Transverse colon (tissue), 4 donors: ENCODE measurements at regions of chr9 and their contacts with region 1.

Region 1: DNA sequence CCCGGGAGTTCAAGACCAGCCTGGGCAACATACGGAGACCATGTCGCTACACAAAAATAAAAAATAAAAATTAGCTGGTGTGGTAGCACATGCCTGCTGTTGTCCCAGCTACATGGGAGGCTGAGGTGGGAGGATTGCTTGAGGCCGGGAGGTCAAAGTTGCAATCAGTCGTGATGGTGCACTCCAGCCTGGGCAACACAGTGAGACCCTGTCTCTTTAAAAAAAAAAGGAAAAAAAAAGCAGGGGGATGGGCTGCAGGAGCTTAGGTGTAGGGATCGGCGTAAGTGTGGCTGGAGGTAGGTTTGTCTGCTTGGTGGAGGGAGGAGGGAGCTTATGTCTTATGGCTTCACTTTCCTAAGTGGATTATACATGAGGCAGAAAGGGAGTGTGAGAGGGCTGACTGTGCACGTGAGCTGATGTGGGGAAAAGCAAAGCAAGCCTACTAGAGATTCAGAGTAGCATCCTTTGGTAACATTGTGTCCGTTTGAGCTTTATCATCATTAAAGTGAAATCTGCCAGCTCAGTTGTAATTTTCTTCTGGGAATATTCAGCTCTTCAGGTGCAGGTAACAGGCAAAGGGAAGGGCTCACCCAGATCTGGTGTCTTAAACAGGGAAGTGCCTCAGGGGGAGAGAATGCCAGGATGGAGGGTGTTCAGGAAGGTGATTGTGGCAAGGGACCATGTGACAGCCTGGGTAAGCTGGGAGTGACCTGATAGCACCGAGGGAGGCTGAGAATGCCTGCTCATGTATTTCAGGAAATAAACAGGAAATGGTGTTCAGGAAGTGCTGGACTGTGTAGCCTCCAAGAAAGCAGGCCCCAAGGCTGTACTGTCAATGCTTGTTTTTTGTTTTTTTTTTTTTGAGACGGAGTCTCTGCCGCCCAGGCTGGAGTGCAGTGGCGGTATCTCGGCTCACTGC is 17.6 kb upstream of the SETX start:
- DNase-seq: peak; percentile 35
- H3K4me3 ChIP-seq: no peak overlapping the region
- H3K27ac ChIP-seq: peak overlapping the region; percentile 16 to 53 (median 36)
- H3K4me1 ChIP-seq: peaks cover 0 to 9% (median 0%) of the 10 kb centered on the region in 4 donors
- H3K27me3 ChIP-seq: no peaks in the 10 kb centered on the region
- CTCF ChIP-seq: no peak
- EP300 ChIP-seq: no peak
- POLR2A ChIP-seq: no peak

Region 2: DNA sequence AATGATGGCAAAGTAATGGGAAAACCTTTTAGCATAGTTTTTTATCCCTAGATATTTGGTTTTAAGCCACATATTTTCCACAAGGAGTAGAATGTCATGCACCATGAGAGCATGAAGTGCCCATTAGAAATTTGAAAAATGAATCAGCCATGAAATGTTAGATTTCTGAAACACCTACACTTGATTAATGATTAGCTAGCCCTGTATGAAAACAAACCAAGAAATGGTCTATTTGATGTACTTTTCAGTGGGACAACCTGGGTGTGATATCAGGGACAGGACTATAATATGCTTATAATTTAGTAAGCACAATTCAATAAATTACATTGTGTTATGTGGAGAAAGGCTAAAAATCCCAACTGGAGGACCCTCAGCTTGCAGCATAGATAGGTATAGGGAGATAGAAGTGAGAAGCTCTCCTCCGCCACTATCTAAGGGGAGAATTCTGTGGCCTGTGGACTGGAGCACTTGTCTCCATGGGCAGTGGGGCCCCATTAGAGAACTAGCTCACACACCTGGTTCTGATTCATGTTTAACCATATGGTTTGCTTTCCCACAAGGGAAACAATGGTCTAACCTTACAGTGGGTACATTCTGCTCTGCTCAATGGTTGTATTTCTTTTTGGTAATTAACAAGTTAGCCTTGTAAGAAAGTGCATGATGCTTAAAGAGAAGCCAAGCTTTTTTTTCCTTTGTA is 1211.9 kb before region 1 on chr9:
- in situ Hi-C with region 1: no loop called
- intact Hi-C with region 1: loop called (anchors 5 kb)
- DNase-seq: no peak
- H3K4me3 ChIP-seq: no peak overlapping the region
- H3K27ac ChIP-seq: no peak overlapping the region
- H3K4me1 ChIP-seq: no peaks in the 10 kb centered on the region
- H3K27me3 ChIP-seq: no peaks in the 10 kb centered on the region
- CTCF ChIP-seq: no peak
- EP300 ChIP-seq: no peak
- POLR2A ChIP-seq: no peak

Region 3: GRCh38 chr9:132216861-132217619 is 155.4 kb before region 1 on chr9:
- in situ Hi-C with region 1: no loop called
- intact Hi-C with region 1: no loop called
- DNase-seq: no peak
- H3K4me3 ChIP-seq: no peak overlapping the region
- H3K27ac ChIP-seq: no peak overlapping the region
- H3K4me1 ChIP-seq: no peaks in the 10 kb centered on the region
- H3K27me3 ChIP-seq: no peaks in the 10 kb centered on the region
- CTCF ChIP-seq: no peak
- EP300 ChIP-seq: no peak
- POLR2A ChIP-seq: no peak